Activated B cell treated with CpG ODN at 0.5 μM for 24 hours (primary cell): ENCODE measurements at regions of chr1 and their contacts with region 1.

Region 1: GRCh38 chr1:244047621-244048471 is 3.2 kb upstream of the ZBTB18 start:
- DNase-seq: peak; percentile 84
- ATAC-seq: peak; percentile 83
- H3K4me3 Mint-ChIP-seq: peak overlapping the region; percentile 97
- H3K27ac Mint-ChIP-seq: peak overlapping the region; percentile 99
- H3K4me1 Mint-ChIP-seq: peaks cover 22% of the 10 kb centered on the region
- H3K27me3 Mint-ChIP-seq: no peaks in the 10 kb centered on the region
- CTCF ChIP-seq: no peak

Region 2: DNA sequence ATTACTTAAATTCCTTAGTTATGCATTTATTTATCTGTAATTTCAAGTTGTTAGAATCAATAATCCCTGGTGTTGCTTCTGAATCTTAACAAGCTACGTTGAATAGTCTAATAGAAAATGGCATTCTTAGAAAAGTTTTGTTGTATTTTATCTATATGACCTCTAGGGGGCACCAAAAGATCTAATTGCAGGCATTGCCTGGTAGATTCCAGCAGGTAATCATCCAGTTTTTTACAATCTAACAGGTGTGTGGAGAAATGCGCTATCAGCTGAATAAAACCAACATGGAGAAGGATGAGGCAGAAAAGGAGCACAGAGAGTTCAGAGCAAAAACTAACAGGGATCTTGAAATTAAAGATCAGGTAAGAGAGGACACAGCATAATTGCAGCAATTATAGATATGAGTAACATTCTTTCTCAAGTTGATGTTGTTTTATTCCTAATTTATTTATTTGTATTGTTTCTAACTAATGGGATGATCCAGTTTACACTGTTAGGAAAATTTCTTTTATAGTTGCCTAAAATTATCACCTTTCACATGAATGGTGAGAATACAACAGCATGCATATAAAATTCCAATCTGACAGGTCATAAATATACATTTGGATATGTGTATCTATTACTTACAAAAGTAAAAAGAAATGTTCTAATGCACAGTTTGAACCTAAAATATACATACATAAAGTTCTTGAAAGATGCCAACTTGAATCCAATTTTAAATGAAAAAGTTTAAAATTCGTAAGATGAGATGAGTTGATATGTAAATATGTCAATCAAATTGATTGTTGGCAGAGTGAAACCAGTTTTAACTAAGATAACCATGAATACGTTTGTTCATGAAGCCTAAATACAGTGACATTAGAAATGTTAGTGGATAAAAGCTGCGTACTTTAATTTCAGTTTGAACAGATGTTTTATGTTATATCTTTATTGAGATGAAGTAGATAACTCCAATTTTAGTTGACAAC is 703.6 kb before region 1 on chr1:
- CTCF ChIA-PET with region 1: interaction called, 3 read pairs
- POLR2A ChIA-PET with region 1: no interaction called
- intact Hi-C with region 1: loop called (anchors 10 kb)
- DNase-seq: no peak
- ATAC-seq: no peak
- H3K4me3 Mint-ChIP-seq: no peak overlapping the region
- H3K27ac Mint-ChIP-seq: no peak overlapping the region
- H3K4me1 Mint-ChIP-seq: no peaks in the 10 kb centered on the region
- H3K27me3 Mint-ChIP-seq: no peaks in the 10 kb centered on the region
- CTCF ChIP-seq: peak; percentile 88

Region 3: GRCh38 chr1:243850452-243851256 is 197.2 kb before region 1 on chr1:
- CTCF ChIA-PET with region 1: no interaction called
- POLR2A ChIA-PET with region 1: interaction called, 39 read pairs
- intact Hi-C with region 1: loop called (anchors 1 kb)
- DNase-seq: peak; percentile 76
- ATAC-seq: peak; percentile 47
- H3K4me3 Mint-ChIP-seq: peak overlapping the region; percentile 93
- H3K27ac Mint-ChIP-seq: peak overlapping the region; percentile 90
- H3K4me1 Mint-ChIP-seq: peaks cover 33% of the 10 kb centered on the region
- H3K27me3 Mint-ChIP-seq: peaks cover 2% of the 10 kb centered on the region
- CTCF ChIP-seq: no peak

Region 4: GRCh38 chr1:244074559-244075171 is 26.8 kb after region 1 on chr1:
- CTCF ChIA-PET with region 1: interaction called, 7 read pairs
- POLR2A ChIA-PET with region 1: interaction called, 63 read pairs
- intact Hi-C with region 1: loop called (anchors 1 kb)
- DNase-seq: peak; percentile 34
- ATAC-seq: peak; percentile 69
- H3K4me3 Mint-ChIP-seq: peak overlapping the region; percentile 83
- H3K27ac Mint-ChIP-seq: peak overlapping the region; percentile 88
- H3K4me1 Mint-ChIP-seq: peaks cover 50% of the 10 kb centered on the region
- H3K27me3 Mint-ChIP-seq: no peaks in the 10 kb centered on the region
- CTCF ChIP-seq: no peak

Region 5: DNA sequence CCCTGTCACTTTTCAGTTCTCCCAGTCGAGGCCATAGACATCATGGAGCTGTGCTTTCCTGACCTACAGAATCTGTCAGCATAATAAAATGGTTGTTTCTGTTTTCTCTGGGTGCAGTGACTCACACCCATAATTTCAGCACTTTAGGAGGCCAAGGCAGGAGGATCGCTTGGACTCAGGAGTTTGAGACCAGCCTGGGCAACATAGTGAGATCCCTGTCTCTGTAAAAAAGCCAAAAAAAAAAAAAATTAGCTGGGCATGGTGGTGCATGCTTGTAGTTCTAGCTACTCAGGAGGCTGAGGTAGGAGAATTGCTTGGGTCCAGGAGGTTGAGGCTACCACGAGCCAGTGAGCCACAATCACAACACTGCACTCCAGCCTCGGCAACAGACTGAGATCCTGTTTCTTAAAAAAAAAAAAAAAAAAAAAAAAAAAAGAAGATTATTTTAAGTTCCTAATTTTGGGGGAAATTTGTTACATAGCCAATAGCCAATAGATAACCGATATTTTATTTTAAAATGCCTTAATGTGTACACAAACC is 207.7 kb after region 1 on chr1:
- CTCF ChIA-PET with region 1: no interaction called
- POLR2A ChIA-PET with region 1: interaction called, 9 read pairs
- intact Hi-C with region 1: loop called (anchors 2 kb)
- DNase-seq: no peak
- ATAC-seq: no peak
- H3K4me3 Mint-ChIP-seq: no peak overlapping the region
- H3K27ac Mint-ChIP-seq: peak overlapping the region; percentile 84
- H3K4me1 Mint-ChIP-seq: peaks cover 46% of the 10 kb centered on the region
- H3K27me3 Mint-ChIP-seq: no peaks in the 10 kb centered on the region
- CTCF ChIP-seq: no peak

Region 6: GRCh38 chr1:244302889-244303613 is 255.2 kb after region 1 on chr1:
- CTCF ChIA-PET with region 1: interaction called, 3 read pairs
- POLR2A ChIA-PET with region 1: interaction called, 11 read pairs
- intact Hi-C with region 1: loop called (anchors 1 kb)
- DNase-seq: no peak
- ATAC-seq: no peak
- H3K4me3 Mint-ChIP-seq: no peak overlapping the region
- H3K27ac Mint-ChIP-seq: no peak overlapping the region
- H3K4me1 Mint-ChIP-seq: peaks cover 19% of the 10 kb centered on the region
- H3K27me3 Mint-ChIP-seq: no peaks in the 10 kb centered on the region
- CTCF ChIP-seq: no peak

Region 7: GRCh38 chr1:244652699-244653466 is 605.0 kb after region 1 on chr1 and contains the start of gene DESI2:
- CTCF ChIA-PET with region 1: no interaction called
- POLR2A ChIA-PET with region 1: no interaction called
- intact Hi-C with region 1: loop called (anchors 2 kb)
- DNase-seq: peak; percentile 98
- ATAC-seq: peak; percentile 91
- H3K4me3 Mint-ChIP-seq: peak within 1 kb of the TSS; percentile 86
- H3K27ac Mint-ChIP-seq: peak within 1 kb of the TSS; percentile 88
- H3K4me1 Mint-ChIP-seq: peaks cover 18% of the 10 kb centered on the region
- H3K27me3 Mint-ChIP-seq: no peaks in the 10 kb centered on the region
- CTCF ChIP-seq: no peak
- total RNA-seq, gene DESI2: 24.2 and 25.8 TPM in 2 replicates